ENCODE measurements at regions of chr18 and their contacts with region 1.

Region 1: DNA sequence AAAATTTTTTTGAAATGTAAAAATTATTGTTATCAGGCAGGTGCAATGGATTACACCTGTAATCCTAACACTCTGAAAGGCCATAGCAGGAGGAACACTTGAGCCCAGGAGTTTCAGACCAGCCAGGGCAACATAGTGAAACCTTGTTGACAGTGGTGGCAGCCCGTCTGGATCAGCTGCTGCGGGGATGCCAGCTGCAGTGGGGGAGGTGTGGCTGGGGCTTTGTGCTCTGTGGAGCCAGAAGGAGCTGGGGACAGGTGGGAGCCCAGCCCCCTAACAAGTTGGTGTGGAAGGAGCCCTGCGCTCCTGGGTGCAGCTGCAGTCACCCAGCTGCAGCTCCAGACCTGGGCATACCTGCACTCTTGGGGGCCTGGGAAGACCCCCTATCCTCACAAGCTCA is 182.4 kb upstream of the MC4R start:
- DNase-seq: no peak
- H3K4me3 ChIP-seq: no peak overlapping the region
- H3K27ac ChIP-seq: no peak overlapping the region
- H3K4me1 ChIP-seq: no peaks in the 10 kb centered on the region
- H3K27me3 ChIP-seq: no peaks in the 10 kb centered on the region
- CTCF ChIP-seq: no peak

Region 2: GRCh38 chr18:59988098-59988706 is 566.8 kb before region 1 on chr18:
- dilution Hi-C with region 1: loop called (anchors 25 kb)
- DNase-seq: no peak
- H3K4me3 ChIP-seq: no peak overlapping the region
- H3K27ac ChIP-seq: no peak overlapping the region
- H3K4me1 ChIP-seq: peaks cover 11% of the 10 kb centered on the region
- H3K27me3 ChIP-seq: no peaks in the 10 kb centered on the region
- CTCF ChIP-seq: peak; percentile 61 to 80 (median 72)